Natural killer cell (primary cell): ENCODE measurements at regions of chr7 and their contacts with region 1.

Region 1: GRCh38 chr7:65006094-65006992 is at the start of gene ERV3-1:
- DNase-seq: peak; percentile 90 to 95
- ATAC-seq: peak; percentile 98 to 99 (median 99)
- H3K4me3 ChIP-seq: peak within 1 kb of the TSS; percentile 85
- H3K4me3 Mint-ChIP-seq: peak within 1 kb of the TSS; percentile 95
- H3K27ac ChIP-seq: peak within 1 kb of the TSS; percentile 82
- H3K27ac Mint-ChIP-seq: peak within 1 kb of the TSS; percentile 93 to 96
- H3K4me1 ChIP-seq: peaks cover 13% of the 10 kb centered on the region
- H3K4me1 Mint-ChIP-seq: peaks cover 51 to 57% of the 10 kb centered on the region in 2 donors
- H3K27me3 ChIP-seq: no peaks in the 10 kb centered on the region
- H3K27me3 Mint-ChIP-seq: no peaks in the 10 kb centered on the region
- CTCF ChIP-seq: no peak
- total RNA-seq, gene ERV3-1: 26.3 to 35.1 (median 34.2) TPM

Region 2: DNA sequence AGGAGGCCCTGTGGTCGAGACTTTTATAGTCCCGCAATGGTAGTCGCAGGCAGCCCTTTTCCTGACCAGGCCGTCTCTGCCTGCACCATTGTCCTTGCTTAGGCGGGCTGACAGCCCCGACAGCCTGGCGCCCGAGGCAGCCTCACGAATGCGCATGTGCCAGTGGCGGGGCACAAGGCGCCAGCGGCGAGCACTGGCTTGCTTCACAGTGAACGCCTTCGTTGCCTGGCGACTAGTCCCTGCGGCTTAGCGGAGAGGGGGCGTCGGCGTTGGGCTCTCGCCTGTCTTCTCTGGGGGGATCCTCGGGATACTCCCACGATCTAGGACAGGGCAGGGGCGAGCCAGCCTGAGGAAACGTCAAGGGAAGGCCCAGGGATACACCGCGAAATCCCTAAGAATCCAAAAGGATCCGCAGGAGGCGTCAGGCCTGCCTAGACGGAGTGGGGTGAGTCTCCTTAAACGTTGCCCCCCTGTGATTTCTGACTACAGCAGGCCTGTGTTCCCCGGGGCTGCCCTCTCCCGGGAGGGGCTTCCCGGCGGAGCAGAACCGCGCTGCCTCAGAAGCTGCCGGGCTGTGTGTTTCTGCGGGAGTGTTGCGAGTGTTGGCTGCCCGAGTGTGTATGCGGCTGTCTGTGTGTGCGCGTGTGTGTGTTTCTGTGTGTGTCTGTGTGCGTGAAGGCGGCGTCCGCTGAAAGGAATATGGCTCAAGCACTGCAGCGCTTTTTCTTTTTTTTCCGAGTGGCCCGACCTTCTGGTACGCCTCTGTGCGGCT is 123.8 kb before region 1 on chr7:
- intact Hi-C with region 1: no loop called
- DNase-seq: peak; percentile 17 to 42
- ATAC-seq: peak in 1 of 3 donors; percentile 55
- H3K4me3 ChIP-seq: no peak overlapping the region
- H3K4me3 Mint-ChIP-seq: peak overlapping the region; percentile 61
- H3K27ac ChIP-seq: no peak overlapping the region
- H3K27ac Mint-ChIP-seq: no peak overlapping the region
- H3K4me1 ChIP-seq: peaks cover 14% of the 10 kb centered on the region
- H3K4me1 Mint-ChIP-seq: peaks cover 11 to 21% of the 10 kb centered on the region in 2 donors
- H3K27me3 ChIP-seq: peaks cover 11% of the 10 kb centered on the region
- H3K27me3 Mint-ChIP-seq: peaks cover 54 to 64% of the 10 kb centered on the region in 2 donors
- CTCF ChIP-seq: no peak

Region 3: DNA sequence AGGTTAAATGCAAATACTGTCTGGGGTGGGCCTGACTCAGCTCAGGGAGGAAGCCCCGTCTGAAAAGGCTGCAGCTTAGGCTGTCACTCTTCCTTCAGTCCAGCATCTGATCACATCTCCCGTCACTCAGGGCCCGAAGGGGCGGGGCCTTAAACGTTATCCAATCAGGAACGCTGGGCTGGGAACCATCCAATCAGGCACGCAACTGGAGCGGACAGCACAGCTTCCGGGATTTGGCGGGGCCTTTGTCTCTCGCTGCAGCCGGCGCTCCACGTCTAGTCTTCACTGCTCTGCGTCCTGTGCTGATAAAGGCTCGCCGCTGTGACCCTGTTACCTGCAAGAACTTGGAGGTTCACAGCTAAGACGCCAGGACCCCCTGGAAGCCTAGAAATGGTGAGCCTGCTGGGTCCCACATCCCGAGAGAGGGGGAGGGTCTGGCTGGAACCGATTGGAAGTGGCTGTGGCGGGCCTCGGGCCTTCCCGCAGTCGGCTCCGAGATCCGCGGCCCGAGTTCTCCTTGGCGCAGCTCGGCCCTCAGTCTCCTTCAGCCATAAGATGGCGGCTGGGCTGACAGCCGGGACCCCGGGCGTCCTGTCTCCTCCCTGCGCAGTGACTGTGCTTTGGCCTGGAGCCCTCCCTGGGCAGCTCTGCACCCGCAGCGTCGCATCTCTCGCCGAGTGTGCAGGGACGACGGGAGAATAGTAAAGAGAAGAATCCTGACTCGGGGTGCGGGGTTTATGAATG is 367.4 kb after region 1 on chr7 and contains the start of gene ZNF92:
- intact Hi-C with region 1: loop called (anchors 10 kb)
- DNase-seq: peak; percentile 97
- ATAC-seq: peak; percentile 97 to 99 (median 98)
- H3K4me3 ChIP-seq: peak within 1 kb of the TSS; percentile 82
- H3K4me3 Mint-ChIP-seq: peak within 1 kb of the TSS; percentile 99
- H3K27ac ChIP-seq: peak within 1 kb of the TSS; percentile 84
- H3K27ac Mint-ChIP-seq: peak within 1 kb of the TSS; percentile 94 to 96
- H3K4me1 ChIP-seq: peaks cover 30% of the 10 kb centered on the region
- H3K4me1 Mint-ChIP-seq: peaks cover 37 to 46% of the 10 kb centered on the region in 2 donors
- H3K27me3 ChIP-seq: no peaks in the 10 kb centered on the region
- H3K27me3 Mint-ChIP-seq: no peaks in the 10 kb centered on the region
- CTCF ChIP-seq: no peak
- total RNA-seq, gene ZNF92: 28.5 to 35.0 (median 33.7) TPM